Activated T-helper 2 cell treated with anti-CD3 and anti-CD28 coated beads, Interferon-gamma antibody, Interleukin-2, Interleukin-4, amounts not matched to agents 10 μg/mL and 5 μg/mL and 100 μg/mL, durations not matched to agents 14 hours and 24 hours and 36 hours (primary cell): ENCODE measurements at regions of chr2 and their contacts with region 1.

Region 1: GRCh38 chr2:213015387-213016165 is 135.8 kb downstream of the IKZF2 start:
- DNase-seq: peak; percentile 51
- H3K4me3 Mint-ChIP-seq: no peak overlapping the region
- H3K27ac Mint-ChIP-seq: peak overlapping the region; percentile 33
- H3K4me1 Mint-ChIP-seq: peaks cover 44% of the 10 kb centered on the region
- H3K27me3 Mint-ChIP-seq: peaks cover 27% of the 10 kb centered on the region

Region 2: DNA sequence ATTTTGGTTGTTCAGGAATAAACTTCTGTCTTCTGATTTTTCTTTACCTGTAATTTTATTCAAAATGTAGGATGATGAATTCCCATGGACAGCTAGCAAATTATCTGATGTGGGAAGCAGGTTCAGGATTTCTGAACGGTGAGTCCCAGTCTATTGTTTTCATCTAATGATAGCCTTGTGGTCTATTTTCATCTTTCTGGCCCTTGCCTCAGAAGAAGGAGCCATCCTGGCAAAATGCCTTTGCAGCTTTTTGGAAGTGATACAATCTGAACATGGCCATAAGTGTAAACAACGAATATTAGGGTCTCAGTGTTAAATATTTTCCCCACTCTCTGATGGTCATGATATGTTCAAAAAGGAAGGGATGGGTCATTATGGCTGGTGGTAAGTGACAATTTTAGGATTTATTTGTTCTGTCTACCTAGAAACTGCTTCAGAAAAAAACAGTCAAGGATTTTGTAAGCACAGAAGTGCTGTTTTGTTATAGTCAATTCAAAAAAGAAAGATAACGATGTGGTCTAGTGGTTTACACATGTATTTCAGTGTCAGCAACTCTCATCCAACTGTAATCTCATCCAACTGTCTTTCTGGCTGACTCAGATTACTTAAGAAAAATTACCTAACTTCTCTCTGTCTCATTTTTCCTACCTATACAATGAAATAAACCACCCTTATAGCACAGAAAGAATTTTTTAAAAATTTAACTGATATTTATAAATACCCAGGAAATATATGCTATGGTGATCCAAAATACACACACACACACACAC is 204.4 kb before region 1 on chr2:
- intact Hi-C with region 1: loop called (anchors 1 kb)
- DNase-seq: no peak
- H3K4me3 Mint-ChIP-seq: no peak overlapping the region
- H3K27ac Mint-ChIP-seq: no peak overlapping the region
- H3K4me1 Mint-ChIP-seq: peaks cover 14% of the 10 kb centered on the region
- H3K27me3 Mint-ChIP-seq: peaks cover 13% of the 10 kb centered on the region

Region 3: GRCh38 chr2:212915121-212915782 is 100.3 kb before region 1 on chr2:
- intact Hi-C with region 1: loop called (anchors 2 kb)
- DNase-seq: no peak
- H3K4me3 Mint-ChIP-seq: peak overlapping the region; percentile 11
- H3K27ac Mint-ChIP-seq: peak overlapping the region; percentile 54
- H3K4me1 Mint-ChIP-seq: peaks cover 30% of the 10 kb centered on the region
- H3K27me3 Mint-ChIP-seq: peaks cover 6% of the 10 kb centered on the region

Region 4: DNA sequence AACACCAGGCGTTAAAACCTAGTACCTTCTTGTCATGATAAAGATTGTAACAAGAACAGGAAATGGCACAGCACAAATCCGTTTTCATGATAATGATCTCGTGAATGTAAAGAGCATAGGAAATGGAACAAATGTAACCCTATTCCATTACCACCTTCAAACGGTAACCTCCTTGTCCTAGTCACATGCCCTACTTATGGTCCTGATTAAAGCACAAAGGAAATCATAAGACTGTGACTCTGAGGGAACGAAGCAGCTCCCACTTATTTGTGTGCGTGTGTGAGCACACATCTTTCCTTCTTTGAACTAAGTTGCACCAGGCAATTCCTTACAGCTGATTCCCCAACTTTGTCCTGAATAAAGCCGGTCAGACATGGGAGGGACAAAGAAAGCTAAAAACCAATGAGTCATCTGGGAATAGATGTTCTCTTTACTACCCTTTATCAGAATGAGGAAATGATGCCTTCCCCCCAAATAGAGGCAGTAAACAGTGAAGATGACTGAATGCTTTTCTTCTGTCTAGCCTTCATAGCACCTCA is 56.8 kb before region 1 on chr2:
- intact Hi-C with region 1: loop called (anchors 1 kb)
- DNase-seq: no peak
- H3K4me3 Mint-ChIP-seq: peak overlapping the region; percentile 19
- H3K27ac Mint-ChIP-seq: peak overlapping the region; percentile 75
- H3K4me1 Mint-ChIP-seq: peaks cover 46% of the 10 kb centered on the region
- H3K27me3 Mint-ChIP-seq: no peaks in the 10 kb centered on the region

Region 5: GRCh38 chr2:213001297-213001910 is 14.2 kb before region 1 on chr2:
- intact Hi-C with region 1: loop called (anchors 2 kb)
- DNase-seq: no peak
- H3K4me3 Mint-ChIP-seq: no peak overlapping the region
- H3K27ac Mint-ChIP-seq: no peak overlapping the region
- H3K4me1 Mint-ChIP-seq: peaks cover 11% of the 10 kb centered on the region
- H3K27me3 Mint-ChIP-seq: peaks cover 27% of the 10 kb centered on the region